ENCODE measurements at regions of chr1 and their contacts with region 1.

Region 1: DNA sequence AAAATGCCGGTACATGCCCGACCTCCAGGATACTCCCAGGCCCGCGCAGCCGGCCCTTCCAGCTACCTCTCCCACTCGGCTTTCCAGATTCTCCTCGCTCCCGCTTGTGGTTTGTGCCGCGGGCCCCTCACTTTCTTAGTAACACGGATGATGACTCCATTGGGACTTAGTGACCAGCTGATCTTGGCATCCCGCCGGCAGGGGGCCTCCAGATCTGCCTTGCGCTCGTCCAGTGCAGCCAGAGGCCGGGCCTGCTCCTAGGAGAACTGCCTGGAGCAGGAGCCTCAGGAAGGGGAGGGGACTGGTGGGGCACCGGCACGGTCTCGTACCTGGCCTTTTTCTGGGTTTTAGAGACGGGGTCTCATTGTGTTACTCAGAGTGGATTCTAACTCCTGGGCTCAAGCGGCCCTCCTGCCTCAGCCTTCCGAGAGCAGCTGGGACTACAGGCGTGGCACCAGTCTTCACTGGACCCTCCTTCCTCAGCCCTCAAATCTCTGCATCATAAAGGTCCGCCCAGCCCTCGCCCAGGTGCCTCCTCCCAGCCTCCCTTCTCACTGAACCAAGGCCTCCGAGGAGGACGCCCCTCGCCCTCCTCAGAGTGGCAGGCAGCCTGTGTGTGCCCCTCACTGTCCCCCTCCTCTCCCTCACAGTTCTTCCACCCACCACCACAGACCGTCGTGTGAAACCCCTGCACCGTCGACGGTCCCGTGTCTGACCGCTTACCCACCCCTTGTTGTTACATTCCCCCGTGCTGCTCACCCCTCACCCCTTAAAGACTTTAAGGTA is 78.6 kb downstream of the SLC25A24 start:
- DNase-seq: no peak
- ATAC-seq: no peak
- H3K4me3 ChIP-seq: no peak overlapping the region
- H3K27ac ChIP-seq: no peak overlapping the region
- H3K4me1 ChIP-seq: no peaks in the 10 kb centered on the region
- H3K27me3 ChIP-seq: no peaks in the 10 kb centered on the region
- CTCF ChIP-seq: no peak
- POLR2A ChIP-seq: no peak

Region 2: GRCh38 chr1:107622966-107623365 is 498.6 kb before region 1 on chr1:
- intact Hi-C with region 1: no loop called
- DNase-seq: no peak
- ATAC-seq: no peak
- H3K4me3 ChIP-seq: no peak overlapping the region
- H3K27ac ChIP-seq: no peak overlapping the region
- H3K4me1 ChIP-seq: no peaks in the 10 kb centered on the region
- H3K27me3 ChIP-seq: no peaks in the 10 kb centered on the region
- CTCF ChIP-seq: no peak
- POLR2A ChIP-seq: no peak

Region 3: DNA sequence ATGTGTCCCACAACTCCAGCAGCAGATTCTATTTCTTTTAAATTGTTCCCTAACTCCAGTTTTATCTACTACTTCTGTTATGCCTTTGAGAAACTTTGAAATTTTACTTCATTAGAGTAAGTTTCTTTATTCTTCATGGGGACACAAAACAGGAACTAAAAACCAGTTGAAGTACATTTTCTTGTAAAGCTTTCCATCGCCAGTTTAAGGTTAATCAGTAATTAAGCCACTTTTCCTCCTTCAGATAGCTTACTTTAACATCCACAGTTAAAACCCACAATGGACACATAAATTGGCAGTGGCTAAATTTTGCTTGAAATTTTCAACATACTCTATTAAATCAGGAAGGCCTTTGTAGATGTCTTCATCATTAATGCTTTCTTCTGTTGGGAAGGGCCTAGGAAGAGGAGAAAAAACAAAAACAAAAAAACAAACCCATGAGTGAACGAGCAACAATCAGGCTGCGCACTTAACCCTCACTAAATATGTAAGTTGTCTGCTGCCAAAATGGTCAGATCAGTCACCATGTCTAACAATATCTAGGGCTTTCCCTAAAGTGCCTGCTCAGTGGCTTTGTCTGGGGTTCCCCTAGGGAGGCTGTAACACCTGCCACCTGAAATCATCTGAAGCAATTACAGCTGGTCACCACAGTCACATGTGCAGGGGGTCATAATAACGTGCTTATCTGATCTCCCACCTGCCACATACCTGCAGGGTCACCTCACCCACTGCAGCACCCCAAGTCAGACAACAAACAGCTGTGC is 344.5 kb before region 1 on chr1:
- intact Hi-C with region 1: loop called (anchors 5 kb)
- DNase-seq: no peak
- ATAC-seq: no peak
- H3K4me3 ChIP-seq: no peak overlapping the region
- H3K27ac ChIP-seq: no peak overlapping the region
- H3K4me1 ChIP-seq: no peaks in the 10 kb centered on the region
- H3K27me3 ChIP-seq: no peaks in the 10 kb centered on the region
- CTCF ChIP-seq: no peak
- POLR2A ChIP-seq: no peak

Region 4: GRCh38 chr1:107782217-107782845 is 339.2 kb before region 1 on chr1:
- intact Hi-C with region 1: loop called (anchors 5 kb)
- DNase-seq: no peak
- ATAC-seq: peak; percentile 79 to 84 (median 80)
- H3K4me3 ChIP-seq: no peak overlapping the region
- H3K27ac ChIP-seq: no peak overlapping the region
- H3K4me1 ChIP-seq: peaks cover 0 to 6% (median 0%) of the 10 kb centered on the region in 4 donors
- H3K27me3 ChIP-seq: no peaks in the 10 kb centered on the region
- CTCF ChIP-seq: peak; percentile 67 to 74 (median 72)
- POLR2A ChIP-seq: no peak

Measured in right lobe of liver (tissue), 6 donors.